Activated B cell treated with CpG ODN at 0.5 μM for 24 hours (primary cell): ENCODE measurements at regions of chr17 and their contacts with region 1.

Region 1: DNA sequence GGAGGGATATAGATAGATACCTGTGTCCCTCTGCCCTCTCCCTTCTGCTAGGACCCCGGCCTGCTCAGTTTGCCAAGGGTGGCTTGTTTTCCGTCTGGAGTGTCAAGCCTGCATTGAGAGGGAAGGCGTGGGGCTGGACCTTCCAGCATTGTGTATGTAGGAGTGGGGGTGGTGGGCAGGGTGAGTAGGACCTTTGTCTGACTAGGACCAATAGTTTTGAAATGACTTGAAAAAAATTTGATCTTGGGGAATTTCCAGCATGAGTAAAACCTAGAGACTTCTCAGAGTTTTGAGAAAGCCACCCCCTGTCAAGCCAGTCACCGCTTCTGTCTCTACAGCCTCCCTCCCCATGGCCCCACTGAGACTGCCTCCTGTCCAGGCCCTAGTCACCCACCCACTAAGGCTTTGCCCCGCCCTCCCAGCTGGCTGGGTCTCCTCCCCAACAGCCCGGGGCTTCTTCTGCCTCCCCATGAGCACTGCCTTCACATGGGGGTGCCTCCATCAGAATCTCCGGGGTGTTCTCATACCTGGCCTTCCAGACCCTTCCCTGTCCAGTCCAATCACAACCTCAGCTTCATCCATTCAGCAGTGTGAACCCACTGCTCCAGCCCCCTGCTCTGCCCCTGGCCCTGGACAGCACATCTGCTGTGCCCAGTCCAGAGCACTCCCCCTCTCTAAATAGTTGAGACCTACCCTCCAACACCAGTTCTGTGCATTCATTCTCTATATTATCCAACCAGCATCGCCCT is 207.0 kb downstream of the MSI2 start:
- DNase-seq: peak; percentile 52
- ATAC-seq: peak; percentile 94
- H3K4me3 Mint-ChIP-seq: peak overlapping the region; percentile 65
- H3K27ac Mint-ChIP-seq: peak overlapping the region; percentile 79
- H3K4me1 Mint-ChIP-seq: peaks cover 89% of the 10 kb centered on the region
- H3K27me3 Mint-ChIP-seq: no peaks in the 10 kb centered on the region
- CTCF ChIP-seq: no peak

Region 2: GRCh38 chr17:57412520-57413096 is 50.7 kb before region 1 on chr17:
- CTCF ChIA-PET with region 1: no interaction called
- POLR2A ChIA-PET with region 1: no interaction called
- intact Hi-C with region 1: no loop called
- DNase-seq: no peak
- ATAC-seq: no peak
- H3K4me3 Mint-ChIP-seq: no peak overlapping the region
- H3K27ac Mint-ChIP-seq: no peak overlapping the region
- H3K4me1 Mint-ChIP-seq: peaks cover 17% of the 10 kb centered on the region
- H3K27me3 Mint-ChIP-seq: no peaks in the 10 kb centered on the region
- CTCF ChIP-seq: no peak

Region 3: GRCh38 chr17:57422574-57423164 is 40.6 kb before region 1 on chr17:
- CTCF ChIA-PET with region 1: no interaction called
- POLR2A ChIA-PET with region 1: no interaction called
- intact Hi-C with region 1: loop called (anchors 1 kb)
- DNase-seq: no peak
- ATAC-seq: peak; percentile 93
- H3K4me3 Mint-ChIP-seq: peak overlapping the region; percentile 35
- H3K27ac Mint-ChIP-seq: peak overlapping the region; percentile 50
- H3K4me1 Mint-ChIP-seq: peaks cover 46% of the 10 kb centered on the region
- H3K27me3 Mint-ChIP-seq: no peaks in the 10 kb centered on the region
- CTCF ChIP-seq: no peak

Region 4: GRCh38 chr17:57486873-57487301 is 23.6 kb after region 1 on chr17:
- CTCF ChIA-PET with region 1: no interaction called
- POLR2A ChIA-PET with region 1: no interaction called
- intact Hi-C with region 1: loop called (anchors 1 kb)
- DNase-seq: no peak
- ATAC-seq: peak; percentile 37
- H3K4me3 Mint-ChIP-seq: no peak overlapping the region
- H3K27ac Mint-ChIP-seq: no peak overlapping the region
- H3K4me1 Mint-ChIP-seq: peaks cover 49% of the 10 kb centered on the region
- H3K27me3 Mint-ChIP-seq: no peaks in the 10 kb centered on the region
- CTCF ChIP-seq: no peak

Region 5: GRCh38 chr17:57622683-57623433 is 159.6 kb after region 1 on chr17:
- CTCF ChIA-PET with region 1: no interaction called
- POLR2A ChIA-PET with region 1: interaction called, 3 read pairs
- intact Hi-C with region 1: loop called (anchors 1 kb)
- DNase-seq: no peak
- ATAC-seq: peak; percentile 82
- H3K4me3 Mint-ChIP-seq: peak overlapping the region; percentile 77
- H3K27ac Mint-ChIP-seq: peak overlapping the region; percentile 89
- H3K4me1 Mint-ChIP-seq: peaks cover 60% of the 10 kb centered on the region
- H3K27me3 Mint-ChIP-seq: no peaks in the 10 kb centered on the region
- CTCF ChIP-seq: no peak